ENCODE measurements at regions of chr3 and their contacts with region 1.

Region 1: DNA sequence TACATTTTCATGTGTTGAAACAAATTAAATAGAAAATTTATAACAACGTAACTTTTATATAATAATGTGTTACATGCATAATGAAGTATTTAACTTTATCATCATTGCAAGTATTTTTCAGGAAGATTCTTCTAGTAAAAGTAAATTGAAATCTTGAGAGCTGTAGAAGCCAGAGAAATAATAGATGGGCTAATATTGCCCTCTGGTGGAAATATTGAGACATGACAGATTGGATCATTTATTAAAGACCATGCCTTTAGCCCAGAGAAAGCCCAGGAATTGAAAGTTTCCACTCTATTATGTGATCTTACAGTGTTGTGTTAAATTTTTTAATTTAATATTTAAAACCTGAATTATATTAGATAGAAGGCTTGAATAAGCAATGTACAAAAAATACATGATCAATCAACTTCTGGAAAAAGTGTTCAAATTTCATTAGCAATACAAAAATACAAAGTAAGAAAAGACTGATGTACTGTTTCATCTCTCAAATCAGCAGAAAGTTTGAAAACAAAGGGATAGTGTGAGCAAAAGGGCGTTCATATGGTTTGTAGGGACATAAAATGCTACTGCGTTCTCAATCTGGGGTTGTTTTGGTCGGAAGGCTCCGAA is 52.7 kb upstream of the SPTSSB start:
- DNase-seq: no peak
- H3K4me3 ChIP-seq: no peak overlapping the region
- H3K27ac ChIP-seq: no peak overlapping the region
- H3K4me1 ChIP-seq: no peaks in the 10 kb centered on the region
- H3K27me3 ChIP-seq: no peaks in the 10 kb centered on the region
- CTCF ChIP-seq: peak; percentile 83 to 89 (median 86)
- POLR2A ChIP-seq: no peak

Region 2: GRCh38 chr3:161274719-161275298 is 149.2 kb before region 1 on chr3:
- intact Hi-C with region 1: loop called (anchors 5 kb)
- DNase-seq: no peak
- H3K4me3 ChIP-seq: no peak overlapping the region
- H3K27ac ChIP-seq: no peak overlapping the region
- H3K4me1 ChIP-seq: no peaks in the 10 kb centered on the region
- H3K27me3 ChIP-seq: no peaks in the 10 kb centered on the region
- CTCF ChIP-seq: peak in 1 of 3 donors; percentile 23
- POLR2A ChIP-seq: no peak

Region 3: GRCh38 chr3:161455962-161456361 is 31.9 kb after region 1 on chr3:
- intact Hi-C with region 1: loop called (anchors 2 kb)
- DNase-seq: no peak
- H3K4me3 ChIP-seq: no peak overlapping the region
- H3K27ac ChIP-seq: no peak overlapping the region
- H3K4me1 ChIP-seq: no peaks in the 10 kb centered on the region
- H3K27me3 ChIP-seq: no peaks in the 10 kb centered on the region
- CTCF ChIP-seq: no peak
- POLR2A ChIP-seq: no peak

Measured in breast epithelium (tissue), 4 donors.